Activated B cell treated with CpG ODN at 0.5 μM for 24 hours (primary cell): ENCODE measurements at regions of chr6 and their contacts with region 1.

Region 1: GRCh38 chr6:10411971-10412745 is 2.7 kb downstream of the TFAP2A start:
- DNase-seq: no peak
- ATAC-seq: peak; percentile 60
- H3K4me3 Mint-ChIP-seq: peak overlapping the region; percentile 92
- H3K27ac Mint-ChIP-seq: peak overlapping the region; percentile 65
- H3K4me1 Mint-ChIP-seq: peaks cover 22% of the 10 kb centered on the region
- H3K27me3 Mint-ChIP-seq: peaks cover 63% of the 10 kb centered on the region
- CTCF ChIP-seq: no peak

Region 2: DNA sequence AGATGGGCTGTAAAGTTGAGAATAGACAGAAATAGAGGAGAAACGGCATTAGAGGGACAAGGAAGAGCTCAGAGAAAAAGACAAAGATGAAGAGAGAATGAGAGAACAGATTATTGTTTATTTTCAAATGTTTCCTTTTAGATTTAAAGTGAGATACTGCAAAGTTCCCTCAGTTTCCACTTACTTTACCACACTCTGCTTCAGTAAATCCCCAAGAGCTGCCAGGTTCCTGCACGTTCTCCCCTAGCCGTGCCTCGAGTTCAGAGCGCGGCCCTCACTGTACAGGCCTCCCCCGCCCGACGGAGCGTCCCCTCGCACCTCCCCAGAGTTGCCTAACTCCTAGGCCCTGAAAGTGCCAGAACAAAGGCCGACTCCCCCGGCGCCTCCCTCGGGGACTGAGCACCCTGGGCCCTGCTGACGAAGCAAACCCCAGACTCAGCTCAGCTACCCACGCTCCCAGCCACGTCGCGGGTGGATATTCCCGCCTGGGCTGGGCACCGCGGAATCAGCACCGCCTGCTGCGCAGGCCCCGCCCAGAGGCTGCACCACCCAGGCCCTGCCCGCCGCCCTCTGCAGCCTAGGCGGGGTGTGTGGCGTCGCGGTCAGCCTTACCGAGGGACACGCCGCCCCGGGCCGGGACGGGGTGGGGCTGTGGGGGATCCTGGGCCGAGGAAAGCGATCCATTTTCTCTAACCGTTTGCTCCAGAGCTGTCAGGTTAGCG is 28.9 kb before region 1 on chr6:
- CTCF ChIA-PET with region 1: interaction called, 3 read pairs
- POLR2A ChIA-PET with region 1: no interaction called
- intact Hi-C with region 1: loop called (anchors 2 kb)
- DNase-seq: no peak
- ATAC-seq: no peak
- H3K4me3 Mint-ChIP-seq: no peak overlapping the region
- H3K27ac Mint-ChIP-seq: no peak overlapping the region
- H3K4me1 Mint-ChIP-seq: peaks cover 3% of the 10 kb centered on the region
- H3K27me3 Mint-ChIP-seq: peaks cover 68% of the 10 kb centered on the region
- CTCF ChIP-seq: no peak

Region 3: DNA sequence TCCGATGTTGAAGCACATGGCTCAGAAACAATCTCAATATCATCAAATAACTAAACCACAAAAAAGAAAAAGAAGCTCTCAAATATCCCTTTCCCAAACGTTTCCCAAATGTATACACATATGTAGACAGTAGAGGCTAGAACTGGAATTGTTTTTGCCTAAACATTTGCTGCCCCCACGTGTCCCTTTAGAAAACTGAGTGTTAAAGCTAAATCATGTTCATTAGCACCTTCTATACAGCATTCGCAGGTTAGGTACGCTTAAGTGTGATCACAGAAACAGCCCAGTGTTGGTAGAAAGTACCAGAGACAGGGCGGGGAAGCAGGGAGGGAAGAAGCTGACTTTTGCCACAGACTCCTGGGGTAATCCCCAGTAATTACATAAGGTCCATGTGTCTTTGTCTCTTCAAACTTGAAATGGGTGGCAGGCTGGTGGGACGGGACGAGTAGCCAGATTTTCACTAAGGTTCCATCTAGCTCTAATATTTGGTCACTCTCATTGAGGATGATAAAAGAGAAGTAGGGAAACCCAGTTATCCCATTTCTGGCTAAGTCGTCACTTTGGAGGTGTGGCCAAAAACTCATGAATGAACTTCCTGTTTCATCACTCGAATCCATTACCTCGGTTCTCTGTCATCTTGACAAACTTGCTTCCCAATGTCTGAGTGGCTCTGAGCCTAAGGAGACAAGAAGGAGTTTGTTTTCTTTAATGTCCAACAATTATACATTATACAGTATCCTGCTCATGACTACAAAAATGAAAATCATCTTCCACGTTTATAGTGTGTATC is 17.7 kb after region 1 on chr6:
- CTCF ChIA-PET with region 1: no interaction called
- POLR2A ChIA-PET with region 1: no interaction called
- intact Hi-C with region 1: loop called (anchors 2 kb)
- DNase-seq: no peak
- ATAC-seq: peak; percentile 18
- H3K4me3 Mint-ChIP-seq: peak overlapping the region; percentile 20
- H3K27ac Mint-ChIP-seq: no peak overlapping the region
- H3K4me1 Mint-ChIP-seq: peaks cover 22% of the 10 kb centered on the region
- H3K27me3 Mint-ChIP-seq: peaks cover 46% of the 10 kb centered on the region
- CTCF ChIP-seq: no peak

Region 4: GRCh38 chr6:10886691-10887535 is 474.8 kb after region 1 on chr6 and contains the start of gene SYCP2L:
- CTCF ChIA-PET with region 1: no interaction called
- POLR2A ChIA-PET with region 1: no interaction called
- intact Hi-C with region 1: loop called (anchors 5 kb)
- DNase-seq: no peak
- ATAC-seq: peak; percentile 10
- H3K4me3 Mint-ChIP-seq: peak within 1 kb of the TSS; percentile 67
- H3K27ac Mint-ChIP-seq: no peak within 1 kb of the TSS
- H3K4me1 Mint-ChIP-seq: peaks cover 39% of the 10 kb centered on the region
- H3K27me3 Mint-ChIP-seq: peaks cover 48% of the 10 kb centered on the region
- CTCF ChIP-seq: no peak
- total RNA-seq, gene SYCP2L: 0.13 and 0.17 TPM in 2 replicates